H1 (cell line): ENCODE measurements at regions of chr1 and their contacts with region 1.

Region 1: DNA sequence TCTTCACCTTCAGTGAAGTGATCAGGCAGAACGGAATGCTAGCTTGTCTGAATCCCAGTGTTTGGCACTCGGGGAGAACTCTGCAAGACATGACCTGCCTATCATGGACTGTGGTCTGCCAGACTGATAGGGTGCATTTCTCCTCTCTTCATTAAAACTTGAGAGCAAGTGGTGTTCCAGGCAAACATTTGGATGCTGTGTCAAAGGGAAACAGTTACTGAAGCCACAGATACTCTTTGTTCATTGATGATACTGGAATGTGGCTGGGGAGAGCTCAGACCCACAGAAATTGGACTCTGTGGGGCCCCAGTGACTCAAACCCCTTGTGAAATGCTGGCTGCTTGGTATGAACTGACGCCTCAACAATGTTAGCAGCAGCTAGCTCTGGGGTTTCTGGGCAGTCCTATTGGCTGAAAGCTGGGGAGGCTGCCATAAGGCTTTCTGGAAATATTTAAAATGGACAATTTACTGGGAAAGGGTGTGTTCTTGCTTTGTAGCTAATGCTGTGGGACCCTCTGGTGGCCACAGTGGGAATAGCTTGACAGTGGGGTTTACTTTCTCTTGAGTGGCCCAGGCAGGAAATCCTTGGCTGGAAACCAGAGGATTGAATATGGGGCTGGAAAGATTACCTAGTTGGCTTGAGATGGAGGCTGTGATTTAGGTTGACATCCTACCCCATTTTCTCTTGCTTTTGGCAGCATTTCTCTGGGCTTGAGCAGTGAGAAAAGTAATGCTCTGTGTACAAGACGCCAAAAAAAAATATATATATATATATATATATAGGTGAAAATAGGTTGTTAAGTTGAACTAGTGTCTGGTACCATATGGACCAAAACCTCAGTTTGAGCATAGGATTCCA is 8.0 kb upstream of the S100A10 start:
- DNase-seq: peak in 1 of 2 experiments; percentile 88
- H3K4me3 ChIP-seq: no peak overlapping the region
- H3K27ac ChIP-seq: no peak overlapping the region
- H3K4me1 ChIP-seq: peaks cover 0 to 4% (median 0%) of the 10 kb centered on the region in 4 experiments; a peak in 1 of 7 replicates
- H3K27me3 ChIP-seq: no peaks in the 10 kb centered on the region
- CTCF ChIP-seq: peak; percentile 67 to 87 (median 85)
- EP300 ChIP-seq: no peak
- POLR2A ChIP-seq: no peak
- RAD21 ChIP-seq: peak; percentile 92 to 94

Region 2: DNA sequence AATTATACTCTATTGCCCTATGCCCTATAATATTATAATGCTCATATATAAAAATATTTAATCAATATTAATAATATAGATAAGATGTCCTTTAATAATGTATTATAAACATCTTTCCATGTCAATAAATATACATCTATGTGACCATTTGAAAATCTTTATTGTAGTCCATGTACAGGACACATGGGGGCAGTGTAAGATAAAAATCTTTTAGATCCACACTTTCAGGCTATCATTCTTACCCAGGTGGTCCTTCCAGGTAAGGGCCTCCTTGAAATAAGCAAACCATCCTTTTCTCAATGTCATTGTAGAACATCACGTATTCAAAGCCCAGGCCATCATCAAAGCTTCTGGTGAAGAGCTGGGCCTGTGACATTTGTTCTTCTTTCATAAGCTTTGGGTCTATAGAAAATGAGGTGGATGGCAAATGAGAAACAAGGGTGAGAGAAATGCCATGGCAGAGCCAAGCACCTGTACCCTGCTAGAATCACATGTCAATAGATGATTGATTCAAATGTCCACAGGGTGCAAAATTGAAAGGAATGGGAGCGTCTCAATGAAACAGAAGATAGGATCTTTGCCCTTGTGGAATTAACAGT is 112.5 kb before region 1 on chr1:
- CTCF ChIA-PET with region 1: interaction called, 55 read pairs
- POLR2A ChIA-PET with region 1: no interaction called
- DNase-seq: no peak
- H3K4me3 ChIP-seq: no peak overlapping the region
- H3K27ac ChIP-seq: no peak overlapping the region
- H3K4me1 ChIP-seq: no peaks in the 10 kb centered on the region
- H3K27me3 ChIP-seq: no peaks in the 10 kb centered on the region
- CTCF ChIP-seq: peak in 1 of 3 experiments; percentile 17; a peak in 1 of 4 replicates
- EP300 ChIP-seq: no peak
- POLR2A ChIP-seq: no peak
- RAD21 ChIP-seq: peak; percentile 54

Region 3: DNA sequence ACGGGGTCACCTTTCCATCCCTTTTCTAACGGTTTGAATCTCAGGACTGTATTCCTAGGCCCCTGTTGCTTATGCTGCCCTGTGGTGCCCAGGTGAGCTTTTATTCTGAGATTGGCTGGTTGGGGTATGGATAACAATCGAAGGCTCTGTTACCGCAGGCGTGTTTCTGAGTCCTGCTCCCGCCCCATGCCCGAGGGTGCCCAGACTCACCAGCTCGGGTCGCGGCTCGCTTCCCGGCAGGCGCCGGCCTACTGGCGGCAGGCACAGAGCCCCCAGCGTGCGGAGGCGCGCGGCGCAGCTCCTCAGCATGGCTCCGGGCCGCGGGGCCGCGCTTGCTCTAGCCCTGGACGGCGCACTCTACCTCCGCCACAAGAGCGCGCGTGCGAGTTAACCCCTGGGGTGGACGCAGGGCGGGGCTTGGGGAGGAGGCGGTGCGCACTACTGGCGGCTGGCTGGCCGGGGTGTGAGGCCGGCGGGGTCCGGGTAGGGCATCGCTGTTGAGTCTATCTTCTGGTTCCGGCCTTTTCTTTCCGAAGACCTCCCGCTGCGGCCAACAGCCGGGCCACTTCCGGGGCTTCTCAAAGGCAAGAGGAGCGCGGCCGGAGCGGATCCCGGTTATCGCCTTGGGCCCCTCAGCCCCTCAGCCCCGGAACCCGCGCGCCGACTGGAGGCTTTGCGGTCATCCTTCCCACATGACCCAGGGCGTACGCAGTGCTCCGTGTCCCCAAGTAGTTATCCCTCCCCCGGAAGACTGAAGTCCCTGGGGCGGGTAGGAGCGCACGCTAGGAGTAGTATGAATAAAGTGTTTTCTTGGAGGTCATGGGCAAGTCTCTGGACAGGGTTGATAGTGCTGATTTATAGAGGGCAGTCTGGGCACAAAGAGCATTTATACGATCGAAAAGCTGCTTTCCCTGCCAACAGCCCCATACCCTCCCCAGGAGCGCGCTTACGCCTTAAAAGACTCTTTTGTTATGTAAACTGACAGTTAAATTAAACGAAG is 92.2 kb before region 1 on chr1 and contains the start of gene THEM4:
- CTCF ChIA-PET with region 1: interaction called, 14 read pairs
- POLR2A ChIA-PET with region 1: interaction called, 3 read pairs
- DNase-seq: peak; percentile 97 to 99
- H3K4me3 ChIP-seq: peak within 1 kb of the TSS; percentile 60 to 85 (median 74)
- H3K27ac ChIP-seq: peak within 1 kb of the TSS; percentile 87
- H3K4me1 ChIP-seq: peaks cover 0 to 6% (median 2%) of the 10 kb centered on the region in 4 experiments; a peak in 3 of 7 replicates
- H3K27me3 ChIP-seq: no peaks in the 10 kb centered on the region
- CTCF ChIP-seq: peak in 1 of 3 experiments; percentile 27; a peak in 1 of 4 replicates
- EP300 ChIP-seq: peak in 1 of 2 experiments; percentile 44; a peak in 1 of 3 replicates
- POLR2A ChIP-seq: peak; percentile 70 to 86
- RAD21 ChIP-seq: peak; percentile 3 to 8; a peak in 2 of 4 replicates
- total RNA-seq, gene THEM4: 8.6 and 11.2 TPM in 2 replicates

Region 4: GRCh38 chr1:151953409-151954094 is 48.1 kb before region 1 on chr1:
- CTCF ChIA-PET with region 1: interaction called, 553 read pairs
- POLR2A ChIA-PET with region 1: no interaction called
- DNase-seq: no peak
- H3K4me3 ChIP-seq: no peak overlapping the region
- H3K27ac ChIP-seq: no peak overlapping the region
- H3K4me1 ChIP-seq: no peaks in the 10 kb centered on the region
- H3K27me3 ChIP-seq: no peaks in the 10 kb centered on the region
- CTCF ChIP-seq: no peak
- EP300 ChIP-seq: no peak
- POLR2A ChIP-seq: no peak
- RAD21 ChIP-seq: no peak

Region 5: DNA sequence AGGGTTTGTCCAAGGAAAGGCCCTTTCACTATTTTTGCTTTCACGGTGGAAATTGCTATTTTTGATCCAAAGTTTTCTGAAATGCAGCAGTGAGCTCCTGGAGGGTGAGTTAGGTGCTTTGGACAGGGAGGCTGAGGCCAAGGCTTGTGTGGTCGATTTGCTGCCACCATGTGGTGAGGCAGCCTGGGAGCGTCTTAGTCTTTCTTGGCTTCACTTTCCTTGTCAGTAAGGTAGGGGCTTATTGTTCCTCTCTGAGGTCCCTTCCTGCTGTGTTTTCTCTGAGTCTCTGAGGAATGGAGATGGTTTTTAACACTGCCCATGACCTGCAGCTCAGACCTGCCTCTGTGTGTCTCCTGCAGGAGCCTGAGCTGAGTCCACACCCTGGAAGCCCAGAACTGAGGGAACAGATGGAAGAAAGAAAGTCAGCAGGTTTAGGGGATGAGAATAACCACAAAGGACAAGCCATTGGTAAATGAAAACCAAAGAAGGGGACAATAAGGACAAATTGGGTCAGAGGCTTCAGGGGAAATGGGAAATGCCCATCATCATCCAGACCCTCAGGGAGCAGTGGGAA is 12.1 kb after region 1 on chr1:
- CTCF ChIA-PET with region 1: interaction called, 106 read pairs
- POLR2A ChIA-PET with region 1: no interaction called
- DNase-seq: peak in 1 of 2 experiments; percentile 72
- H3K4me3 ChIP-seq: no peak overlapping the region
- H3K27ac ChIP-seq: no peak overlapping the region
- H3K4me1 ChIP-seq: peaks cover 0 to 3% (median 1%) of the 10 kb centered on the region in 4 experiments; a peak in 2 of 7 replicates
- H3K27me3 ChIP-seq: no peaks in the 10 kb centered on the region
- CTCF ChIP-seq: peak; percentile 82 to 92 (median 89)
- EP300 ChIP-seq: no peak
- POLR2A ChIP-seq: no peak
- RAD21 ChIP-seq: peak; percentile 57 to 62